Naive thymus-derived CD8-positive, alpha-beta T cell (primary cell): ENCODE measurements at regions of chr6 and their contacts with region 1.

Region 1: DNA sequence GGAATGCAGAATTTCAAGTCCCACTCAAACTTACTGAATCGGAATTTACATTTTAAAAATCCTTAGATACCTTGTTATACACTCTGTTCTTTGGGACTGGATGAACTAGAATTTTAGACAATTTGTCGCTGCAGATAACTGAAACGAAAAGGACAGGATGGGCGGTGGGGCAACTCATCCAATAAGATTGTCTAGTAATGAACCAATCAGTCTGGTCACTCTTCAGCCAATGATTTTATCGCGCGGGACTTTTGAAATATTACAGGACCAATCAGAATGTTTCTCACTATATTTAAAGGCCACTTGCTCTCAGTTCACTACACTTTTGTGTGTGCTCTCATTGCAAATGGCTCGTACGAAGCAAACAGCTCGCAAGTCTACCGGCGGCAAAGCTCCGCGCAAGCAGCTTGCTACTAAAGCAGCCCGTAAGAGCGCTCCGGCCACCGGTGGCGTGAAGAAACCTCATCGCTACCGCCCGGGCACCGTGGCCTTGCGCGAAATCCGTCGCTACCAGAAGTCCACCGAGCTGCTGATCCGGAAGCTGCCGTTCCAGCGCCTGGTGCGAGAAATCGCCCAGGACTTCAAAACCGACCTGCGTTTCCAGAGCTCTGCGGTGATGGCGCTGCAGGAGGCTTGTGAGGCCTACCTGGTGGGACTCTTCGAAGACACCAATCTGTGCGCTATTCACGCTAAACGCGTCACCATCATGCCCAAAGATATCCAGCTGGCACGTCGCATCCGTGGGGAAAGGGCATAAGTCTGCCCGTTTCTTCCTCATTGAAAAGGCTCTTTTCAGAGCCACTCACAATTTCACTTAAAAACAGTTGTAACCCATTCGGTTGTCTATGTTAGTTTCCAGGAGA is 41.9 kb upstream of the HFE start:
- DNase-seq: peak; percentile 45 to 95 (median 86)
- ATAC-seq: peak; percentile 58 to 63
- H3K4me3 Mint-ChIP-seq: peak overlapping the region; percentile 90 to 97 (median 92)
- H3K27ac Mint-ChIP-seq: peak overlapping the region; percentile 90 to 99 (median 96)
- H3K4me1 Mint-ChIP-seq: peaks cover 8 to 28% (median 14%) of the 10 kb centered on the region in 4 donors
- H3K27me3 Mint-ChIP-seq: no peaks in the 10 kb centered on the region

Region 2: DNA sequence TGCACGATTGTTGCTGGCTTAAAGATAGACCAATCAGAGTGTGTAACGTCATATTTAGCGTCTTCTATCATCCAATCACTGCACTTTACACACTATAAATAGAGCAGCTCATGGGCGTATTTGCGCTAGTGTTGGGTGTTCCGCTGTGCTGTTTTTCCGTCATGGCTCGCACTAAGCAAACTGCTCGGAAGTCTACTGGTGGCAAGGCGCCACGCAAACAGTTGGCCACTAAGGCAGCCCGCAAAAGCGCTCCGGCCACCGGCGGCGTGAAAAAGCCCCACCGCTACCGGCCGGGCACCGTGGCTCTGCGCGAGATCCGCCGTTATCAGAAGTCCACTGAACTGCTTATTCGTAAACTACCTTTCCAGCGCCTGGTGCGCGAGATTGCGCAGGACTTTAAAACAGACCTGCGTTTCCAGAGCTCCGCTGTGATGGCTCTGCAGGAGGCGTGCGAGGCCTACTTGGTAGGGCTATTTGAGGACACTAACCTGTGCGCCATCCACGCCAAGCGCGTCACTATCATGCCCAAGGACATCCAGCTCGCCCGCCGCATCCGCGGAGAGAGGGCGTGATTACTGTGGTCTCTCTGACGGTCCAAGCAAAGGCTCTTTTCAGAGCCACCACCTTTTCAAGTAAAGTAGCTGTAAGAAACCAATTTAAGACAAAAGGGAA is 24.8 kb before region 1 on chr6:
- POLR2A ChIA-PET with region 1: interaction called, 748 read pairs
- DNase-seq: peak; percentile 64 to 94 (median 86)
- ATAC-seq: peak; percentile 50 to 57
- H3K4me3 Mint-ChIP-seq: peak overlapping the region; percentile 85 to 100 (median 97)
- H3K27ac Mint-ChIP-seq: peak overlapping the region; percentile 93 to 100 (median 100)
- H3K4me1 Mint-ChIP-seq: peaks cover 8 to 36% (median 25%) of the 10 kb centered on the region in 4 donors
- H3K27me3 Mint-ChIP-seq: no peaks in the 10 kb centered on the region

Region 3: GRCh38 chr6:26175428-26176181 is 130.3 kb after region 1 on chr6:
- POLR2A ChIA-PET with region 1: interaction called, 10 read pairs
- DNase-seq: peak in 9 of 10 donors; percentile 21 to 76 (median 59)
- ATAC-seq: no peak
- H3K4me3 Mint-ChIP-seq: peak overlapping the region in 5 of 10 donors; percentile 33 to 62 (median 51)
- H3K27ac Mint-ChIP-seq: peak overlapping the region; percentile 11 to 82 (median 59)
- H3K4me1 Mint-ChIP-seq: peaks cover 15 to 43% (median 34%) of the 10 kb centered on the region in 4 donors
- H3K27me3 Mint-ChIP-seq: no peaks in the 10 kb centered on the region

Region 4: DNA sequence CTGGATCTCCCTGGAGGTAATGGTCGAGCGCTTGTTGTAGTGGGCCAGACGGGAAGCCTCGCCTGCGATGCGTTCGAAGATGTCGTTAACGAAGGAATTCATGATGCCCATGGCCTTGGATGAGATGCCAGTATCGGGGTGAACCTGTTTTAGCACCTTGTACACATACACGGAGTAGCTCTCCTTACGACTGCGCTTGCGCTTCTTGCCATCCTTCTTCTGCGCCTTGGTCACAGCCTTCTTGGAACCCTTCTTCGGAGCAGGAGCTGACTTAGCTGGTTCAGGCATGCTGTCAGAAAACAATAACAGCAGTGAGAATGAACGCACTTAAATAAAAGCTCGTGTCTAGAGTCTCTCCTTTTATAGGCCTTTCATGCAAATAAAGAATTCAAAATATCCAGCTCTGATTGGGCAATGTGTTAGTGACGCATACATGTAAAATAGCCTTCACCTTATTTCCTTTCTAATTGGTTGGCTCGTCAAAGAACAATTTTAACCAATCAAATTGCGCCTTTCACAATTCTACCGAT is 171.1 kb after region 1 on chr6:
- POLR2A ChIA-PET with region 1: interaction called, 33 read pairs
- DNase-seq: peak; percentile 34 to 95 (median 86)
- ATAC-seq: peak; percentile 81 to 84
- H3K4me3 Mint-ChIP-seq: no peak overlapping the region
- H3K27ac Mint-ChIP-seq: no peak overlapping the region
- H3K4me1 Mint-ChIP-seq: peaks cover 0 to 12% (median 7%) of the 10 kb centered on the region in 4 donors
- H3K27me3 Mint-ChIP-seq: no peaks in the 10 kb centered on the region

Region 5: DNA sequence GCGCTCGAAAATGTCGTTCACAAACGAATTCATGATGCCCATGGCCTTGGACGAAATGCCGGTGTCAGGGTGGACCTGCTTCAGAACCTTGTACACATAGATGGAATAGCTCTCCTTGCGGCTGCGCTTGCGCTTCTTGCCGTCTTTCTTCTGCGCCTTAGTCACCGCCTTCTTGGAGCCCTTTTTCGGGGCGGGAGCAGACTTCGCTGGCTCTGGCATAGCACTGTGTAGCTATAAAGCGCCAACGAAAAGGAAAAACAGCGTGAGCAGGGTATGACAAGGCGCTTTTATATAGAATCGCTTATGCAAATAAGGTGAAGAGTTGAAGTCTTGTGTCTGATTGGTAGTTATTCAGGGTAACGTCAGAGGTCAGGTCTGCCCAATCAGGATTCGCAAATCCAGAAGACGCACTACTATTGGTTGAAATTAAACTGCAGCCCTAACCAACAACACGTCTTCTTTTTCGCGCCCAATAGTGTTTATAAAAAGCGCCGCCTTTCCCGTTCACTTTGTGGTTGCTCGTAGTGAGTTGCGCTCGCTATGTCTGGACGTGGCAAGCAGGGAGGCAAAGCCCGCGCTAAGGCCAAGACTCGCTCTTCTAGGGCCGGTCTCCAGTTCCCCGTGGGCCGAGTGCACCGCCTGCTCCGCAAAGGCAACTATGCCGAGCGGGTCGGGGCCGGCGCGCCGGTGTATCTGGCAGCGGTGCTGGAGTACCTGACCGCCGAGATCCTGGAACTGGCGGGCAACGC is 1087.4 kb after region 1 on chr6:
- POLR2A ChIA-PET with region 1: interaction called, 16 read pairs
- DNase-seq: peak; percentile 69 to 98 (median 94)
- ATAC-seq: peak; percentile 84
- H3K4me3 Mint-ChIP-seq: no peak overlapping the region
- H3K27ac Mint-ChIP-seq: no peak overlapping the region
- H3K4me1 Mint-ChIP-seq: peaks cover 5 to 20% (median 10%) of the 10 kb centered on the region in 4 donors
- H3K27me3 Mint-ChIP-seq: no peaks in the 10 kb centered on the region

Region 6: DNA sequence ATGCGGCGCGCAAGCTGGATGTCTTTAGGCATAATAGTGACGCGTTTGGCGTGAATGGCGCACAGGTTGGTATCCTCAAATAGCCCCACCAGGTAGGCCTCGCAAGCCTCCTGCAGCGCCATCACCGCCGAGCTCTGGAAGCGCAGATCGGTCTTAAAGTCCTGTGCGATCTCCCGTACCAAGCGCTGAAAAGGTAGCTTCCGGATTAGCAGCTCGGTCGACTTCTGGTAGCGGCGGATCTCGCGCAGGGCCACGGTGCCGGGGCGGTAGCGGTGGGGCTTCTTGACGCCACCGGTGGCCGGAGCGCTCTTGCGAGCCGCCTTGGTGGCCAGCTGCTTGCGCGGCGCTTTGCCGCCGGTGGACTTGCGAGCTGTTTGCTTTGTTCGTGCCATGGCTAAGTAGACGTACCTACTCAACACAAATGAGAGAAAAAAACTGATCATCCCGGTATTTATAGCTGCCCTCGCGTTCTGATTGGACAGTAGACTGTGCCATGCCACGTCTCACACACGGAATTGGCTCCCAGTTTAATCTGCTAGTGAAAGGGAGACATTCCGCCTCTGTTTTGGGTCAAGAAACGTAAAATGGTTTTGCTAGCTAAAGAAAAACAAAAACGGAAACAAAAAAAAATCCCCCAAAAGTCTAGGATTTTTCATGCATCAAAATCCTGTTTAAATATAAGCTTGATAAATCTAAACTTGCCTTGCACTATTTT is 1826.8 kb after region 1 on chr6:
- POLR2A ChIA-PET with region 1: interaction called, 10 read pairs
- DNase-seq: peak; percentile 57 to 99 (median 91)
- ATAC-seq: peak; percentile 78 to 79
- H3K4me3 Mint-ChIP-seq: peak overlapping the region; percentile 86 to 95 (median 92)
- H3K27ac Mint-ChIP-seq: peak overlapping the region; percentile 89 to 99 (median 96)
- H3K4me1 Mint-ChIP-seq: peaks cover 21 to 46% (median 38%) of the 10 kb centered on the region in 4 donors
- H3K27me3 Mint-ChIP-seq: no peaks in the 10 kb centered on the region